MCF 10A (cell line): ENCODE measurements at regions of chr2 and their contacts with region 1.

Region 1: DNA sequence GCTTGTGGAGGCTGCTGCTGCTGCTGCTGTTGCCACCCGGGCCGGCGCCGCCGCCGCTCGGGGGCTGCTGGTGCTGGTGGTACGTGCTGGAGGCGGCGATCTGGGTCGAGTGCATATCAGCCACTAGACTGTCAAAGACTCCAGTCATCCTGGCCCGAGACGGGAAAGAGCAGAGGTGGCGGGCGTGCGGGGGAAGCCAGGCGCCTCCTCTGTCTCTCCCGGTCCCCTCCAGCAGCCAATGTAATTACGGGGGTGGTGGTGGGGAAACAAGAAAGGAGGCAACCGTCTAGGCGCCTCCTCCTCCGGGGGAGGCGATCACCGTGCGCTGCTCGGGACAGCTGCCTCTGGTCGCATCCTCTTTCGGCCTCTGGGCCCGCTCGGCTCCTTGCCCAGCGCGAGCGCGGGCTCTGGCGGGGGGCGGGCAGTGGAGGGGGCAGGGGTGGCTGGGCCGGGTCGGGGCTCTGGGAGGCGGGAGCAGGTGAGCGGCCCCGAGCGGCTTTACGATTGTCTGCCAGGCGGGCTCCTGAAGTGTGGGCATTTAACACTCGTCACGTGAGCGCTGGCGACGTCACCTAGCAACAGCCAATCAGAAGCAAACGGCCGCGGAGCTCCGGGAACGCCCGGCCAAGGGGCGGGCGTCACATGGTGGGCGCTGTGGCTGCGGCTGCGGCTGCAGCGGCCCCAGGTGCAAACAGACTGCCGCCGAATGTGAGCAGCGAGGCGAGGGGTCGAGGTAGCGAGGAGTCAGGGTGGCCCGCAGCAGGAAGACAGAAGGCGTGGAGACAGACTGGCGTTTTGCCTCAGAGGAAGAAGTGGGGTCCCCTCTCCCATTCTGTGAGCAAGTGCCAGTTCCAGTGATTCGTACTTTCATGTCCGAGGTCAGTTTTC is at the start of gene DLX2:
- DNase-seq: peak; percentile 90
- H3K4me3 Mint-ChIP-seq: peak within 1 kb of the TSS; percentile 92
- H3K27ac Mint-ChIP-seq: peak within 1 kb of the TSS; percentile 88
- H3K4me1 Mint-ChIP-seq: peaks cover 13% of the 10 kb centered on the region
- H3K27me3 Mint-ChIP-seq: no peaks in the 10 kb centered on the region
- CTCF ChIP-seq: no peak
- total RNA-seq, gene DLX2: 1.1 and 1.9 TPM in 2 replicates

Region 2: GRCh38 chr2:171574149-171574795 is 528.4 kb before region 1 on chr2:
- CTCF ChIA-PET with region 1: interaction called, 5 read pairs
- POLR2A ChIA-PET with region 1: no interaction called
- intact Hi-C with region 1: loop called (anchors 1 kb)
- DNase-seq: peak; percentile 75
- H3K4me3 Mint-ChIP-seq: no peak overlapping the region
- H3K27ac Mint-ChIP-seq: no peak overlapping the region
- H3K4me1 Mint-ChIP-seq: no peaks in the 10 kb centered on the region
- H3K27me3 Mint-ChIP-seq: no peaks in the 10 kb centered on the region
- CTCF ChIP-seq: peak; percentile 97

Region 3: DNA sequence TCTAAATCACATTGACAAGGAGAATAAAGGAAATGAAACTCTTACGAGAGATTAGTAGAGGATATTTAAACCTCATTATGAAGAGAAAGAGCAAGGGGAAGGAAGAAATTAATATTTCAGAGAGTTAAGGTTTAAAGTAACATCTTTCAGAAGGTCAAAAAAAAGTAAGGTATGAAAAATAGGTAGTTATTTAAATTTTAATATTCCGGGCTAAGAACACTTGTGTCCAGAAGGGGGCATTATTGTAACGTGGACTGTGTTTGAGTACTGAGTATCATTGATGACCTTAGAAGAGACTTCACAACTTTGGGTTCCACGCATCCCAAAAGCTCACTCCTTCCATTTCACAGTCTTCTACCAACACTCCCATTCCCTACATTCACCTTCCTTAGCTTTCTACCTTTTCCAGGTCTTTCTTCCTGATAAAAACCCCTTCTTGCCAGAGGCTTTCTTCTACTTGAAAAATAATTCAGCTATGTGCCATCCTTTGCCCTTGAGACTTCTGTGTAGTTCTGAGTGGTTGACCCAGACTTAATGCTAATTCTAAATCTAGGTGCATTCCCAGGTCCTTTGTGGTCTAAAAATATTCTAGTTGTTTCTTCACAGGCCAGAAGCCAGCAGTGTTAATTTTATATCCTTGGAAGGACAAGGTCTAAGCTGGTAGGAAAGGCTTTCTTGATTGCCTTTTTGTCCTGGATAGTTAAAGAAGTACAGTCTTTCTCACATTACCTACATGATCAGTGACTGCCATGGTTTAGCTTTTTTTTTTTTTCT is 398.9 kb before region 1 on chr2:
- CTCF ChIA-PET with region 1: interaction called, 9 read pairs
- POLR2A ChIA-PET with region 1: interaction called, 8 read pairs
- intact Hi-C with region 1: loop called (anchors 1 kb)
- DNase-seq: peak; percentile 55
- H3K4me3 Mint-ChIP-seq: no peak overlapping the region
- H3K27ac Mint-ChIP-seq: no peak overlapping the region
- H3K4me1 Mint-ChIP-seq: peaks cover 26% of the 10 kb centered on the region
- H3K27me3 Mint-ChIP-seq: no peaks in the 10 kb centered on the region
- CTCF ChIP-seq: peak; percentile 42

Region 4: GRCh38 chr2:171893824-171894611 is 208.6 kb before region 1 on chr2 and contains the start of gene SLC25A12:
- CTCF ChIA-PET with region 1: interaction called, 3 read pairs
- POLR2A ChIA-PET with region 1: interaction called, 17 read pairs
- intact Hi-C with region 1: loop called (anchors 10 kb)
- DNase-seq: peak; percentile 85
- H3K4me3 Mint-ChIP-seq: peak within 1 kb of the TSS; percentile 99
- H3K27ac Mint-ChIP-seq: peak within 1 kb of the TSS; percentile 91
- H3K4me1 Mint-ChIP-seq: peaks cover 27% of the 10 kb centered on the region
- H3K27me3 Mint-ChIP-seq: no peaks in the 10 kb centered on the region
- CTCF ChIP-seq: no peak
- total RNA-seq, gene SLC25A12: 11.5 and 12.5 TPM in 2 replicates

Region 5: DNA sequence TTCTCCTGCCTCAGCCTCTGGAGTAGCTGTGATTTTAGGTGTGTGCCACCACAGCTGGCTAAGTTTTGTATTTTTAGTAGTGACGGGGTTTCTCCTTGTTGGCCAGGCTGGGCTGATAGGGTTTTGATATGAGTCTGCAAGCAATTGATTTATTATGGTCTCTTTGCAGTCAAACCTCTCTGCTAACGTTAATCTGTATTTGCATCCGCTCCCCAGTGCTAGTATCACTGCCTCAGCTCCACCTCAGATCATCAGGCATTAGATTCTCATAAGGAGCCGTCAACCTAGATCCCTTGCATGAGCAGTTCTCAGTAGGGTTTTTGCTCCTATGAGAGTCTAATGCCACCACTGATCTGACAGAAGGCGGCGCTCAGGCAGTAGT is 161.3 kb before region 1 on chr2:
- CTCF ChIA-PET with region 1: interaction called, 5 read pairs
- POLR2A ChIA-PET with region 1: interaction called, 5 read pairs
- intact Hi-C with region 1: loop called (anchors 1 kb)
- DNase-seq: no peak
- H3K4me3 Mint-ChIP-seq: no peak overlapping the region
- H3K27ac Mint-ChIP-seq: no peak overlapping the region
- H3K4me1 Mint-ChIP-seq: peaks cover 2% of the 10 kb centered on the region
- H3K27me3 Mint-ChIP-seq: no peaks in the 10 kb centered on the region
- CTCF ChIP-seq: no peak

Region 6: GRCh38 chr2:171999604-172000469 is 102.8 kb before region 1 on chr2 and contains the start of gene METAP1D:
- CTCF ChIA-PET with region 1: interaction called, 3 read pairs
- POLR2A ChIA-PET with region 1: interaction called, 22 read pairs
- intact Hi-C with region 1: loop called (anchors 2 kb)
- DNase-seq: peak; percentile 80
- H3K4me3 Mint-ChIP-seq: peak within 1 kb of the TSS; percentile 97
- H3K27ac Mint-ChIP-seq: peak within 1 kb of the TSS; percentile 98
- H3K4me1 Mint-ChIP-seq: peaks cover 16% of the 10 kb centered on the region
- H3K27me3 Mint-ChIP-seq: no peaks in the 10 kb centered on the region
- CTCF ChIP-seq: no peak
- total RNA-seq, gene METAP1D: 9.3 and 9.8 TPM in 2 replicates

Region 7: DNA sequence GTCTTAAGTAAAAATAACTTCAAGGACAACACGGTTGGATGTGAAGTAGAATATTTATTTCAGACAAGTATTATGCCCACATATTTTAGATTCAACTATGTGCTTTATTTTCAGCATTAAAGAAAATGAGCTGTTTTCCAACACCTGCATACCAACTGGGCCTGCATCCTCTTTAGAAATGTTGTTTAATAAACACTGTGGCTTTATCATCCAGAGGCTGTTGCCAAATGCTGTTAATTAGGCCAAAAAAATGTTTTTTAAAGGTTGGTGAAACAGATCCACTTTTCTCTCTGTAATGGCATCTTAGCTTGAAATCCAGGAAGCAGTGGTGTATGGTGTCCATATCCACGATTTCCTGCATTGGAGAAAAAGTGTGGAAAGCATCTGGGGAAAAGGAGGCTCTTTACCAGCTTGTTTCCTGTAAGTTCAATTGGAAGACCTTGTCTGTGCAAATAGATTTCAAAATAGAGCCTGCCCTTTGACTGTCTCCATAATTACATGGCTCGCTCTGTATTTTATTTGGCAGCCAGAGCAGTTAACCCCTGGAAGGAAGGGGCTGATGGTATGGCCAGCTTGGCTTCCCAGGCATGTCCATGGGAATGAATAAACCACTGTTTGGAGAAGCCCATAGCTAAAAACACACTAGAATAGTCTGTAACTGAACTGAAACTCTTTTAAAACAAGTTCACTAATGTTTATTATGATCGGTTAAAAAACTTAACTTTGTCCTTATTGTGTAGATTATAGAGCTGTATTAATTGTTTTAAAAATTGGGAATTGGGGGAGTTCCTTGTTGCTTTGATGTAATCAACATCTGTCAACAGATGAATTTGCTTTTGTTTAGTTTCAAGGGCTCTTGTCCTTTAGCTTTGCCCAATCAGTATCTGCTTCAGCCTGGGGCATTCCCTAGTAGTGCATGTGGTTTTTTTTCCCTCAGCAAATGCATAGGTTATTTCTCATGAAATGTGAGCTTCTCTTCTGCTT is 50.3 kb before region 1 on chr2:
- CTCF ChIA-PET with region 1: no interaction called
- POLR2A ChIA-PET with region 1: no interaction called
- intact Hi-C with region 1: no loop called
- DNase-seq: peak; percentile 17
- H3K4me3 Mint-ChIP-seq: no peak overlapping the region
- H3K27ac Mint-ChIP-seq: no peak overlapping the region
- H3K4me1 Mint-ChIP-seq: no peaks in the 10 kb centered on the region
- H3K27me3 Mint-ChIP-seq: no peaks in the 10 kb centered on the region
- CTCF ChIP-seq: no peak

Region 8: GRCh38 chr2:172119089-172119488 is 16.5 kb after region 1 on chr2:
- CTCF ChIA-PET with region 1: interaction called, 7 read pairs
- POLR2A ChIA-PET with region 1: interaction called, 20 read pairs
- intact Hi-C with region 1: no loop called
- DNase-seq: peak; percentile 82
- H3K4me3 Mint-ChIP-seq: no peak overlapping the region
- H3K27ac Mint-ChIP-seq: peak overlapping the region; percentile 61
- H3K4me1 Mint-ChIP-seq: peaks cover 20% of the 10 kb centered on the region
- H3K27me3 Mint-ChIP-seq: no peaks in the 10 kb centered on the region
- CTCF ChIP-seq: no peak